Activated CD8-positive, alpha-beta memory T cell treated with anti-CD3 and anti-CD28 coated beads, Interleukin-2, amount 10 ng/mL, durations not matched to agents 7 days and 5 days (primary cell): ENCODE measurements at regions of chr20 and their contacts with region 1.

Region 1: DNA sequence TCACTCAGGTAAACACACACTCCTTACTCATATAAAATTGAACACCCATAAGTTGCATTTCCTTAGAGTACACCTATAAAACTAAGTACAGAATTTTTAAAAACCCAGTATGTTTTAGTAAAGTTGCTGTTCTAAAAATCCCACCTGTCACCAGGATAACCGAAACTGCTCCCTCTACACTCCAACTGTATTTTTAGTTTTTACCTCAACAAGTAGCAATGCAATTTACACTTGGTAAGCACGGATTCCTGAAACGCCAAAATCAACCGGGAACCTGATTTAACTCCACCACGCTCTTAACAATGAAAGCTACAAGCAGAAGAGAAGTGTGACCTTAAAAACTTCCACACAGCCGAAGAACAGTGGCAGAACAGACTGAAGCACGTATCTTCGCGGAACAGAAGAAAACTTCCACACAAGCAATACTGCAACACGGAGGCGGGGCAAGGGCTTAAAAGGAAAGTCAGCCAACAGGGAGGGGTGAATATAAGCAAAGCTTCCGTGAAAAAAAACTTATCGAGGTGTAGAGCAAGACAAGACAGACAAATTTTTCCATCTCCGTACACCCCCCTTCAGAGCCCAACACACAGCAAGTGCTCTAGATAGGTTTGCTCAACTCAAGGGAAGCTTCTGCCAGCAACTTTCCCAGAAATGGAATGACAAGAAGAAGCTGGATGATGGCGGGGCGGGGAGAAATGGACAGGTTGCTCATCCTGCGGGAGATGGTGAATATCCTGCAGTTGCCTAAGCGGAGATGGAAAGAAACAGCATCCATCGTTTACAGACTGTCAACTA is 1.4 kb downstream of the STAU1 start:
- DNase-seq: peak; percentile 78
- ATAC-seq: peak; percentile 34
- H3K4me3 Mint-ChIP-seq: peak overlapping the region; percentile 91
- H3K27ac Mint-ChIP-seq: peak overlapping the region; percentile 83
- H3K4me1 Mint-ChIP-seq: peaks cover 47% of the 10 kb centered on the region
- H3K27me3 Mint-ChIP-seq: peaks cover 5% of the 10 kb centered on the region

Region 2: GRCh38 chr20:49132995-49133478 is 53.7 kb before region 1 on chr20:
- CTCF ChIA-PET with region 1: interaction called, 11 read pairs
- DNase-seq: no peak
- ATAC-seq: peak; percentile 58
- H3K4me3 Mint-ChIP-seq: no peak overlapping the region
- H3K27ac Mint-ChIP-seq: no peak overlapping the region
- H3K4me1 Mint-ChIP-seq: peaks cover 3% of the 10 kb centered on the region
- H3K27me3 Mint-ChIP-seq: no peaks in the 10 kb centered on the region

Region 3: DNA sequence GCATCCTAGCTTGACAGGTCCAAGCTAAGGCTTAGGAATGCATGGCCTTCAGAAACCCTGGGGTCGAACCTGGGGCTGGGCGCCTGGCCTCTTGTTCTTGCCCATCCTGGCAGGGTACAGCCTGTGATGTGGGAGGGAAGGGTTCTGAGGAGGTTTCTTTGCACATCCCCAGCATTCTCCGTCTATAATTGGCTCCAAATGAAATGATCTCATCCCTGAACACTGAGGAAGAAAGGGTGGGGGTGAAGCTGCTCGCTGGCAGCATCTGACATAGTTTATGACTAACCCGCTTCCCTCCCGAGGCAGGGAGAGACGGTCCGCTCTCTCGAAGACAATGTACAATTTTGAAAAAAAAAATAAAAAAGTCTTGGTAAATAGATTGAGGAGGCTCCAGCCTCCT is 158.2 kb after region 1 on chr20:
- CTCF ChIA-PET with region 1: no interaction called
- DNase-seq: no peak
- ATAC-seq: no peak
- H3K4me3 Mint-ChIP-seq: no peak overlapping the region
- H3K27ac Mint-ChIP-seq: no peak overlapping the region
- H3K4me1 Mint-ChIP-seq: peaks cover 4% of the 10 kb centered on the region
- H3K27me3 Mint-ChIP-seq: peaks cover 35% of the 10 kb centered on the region